Aorta (tissue), 5 donors: ENCODE measurements at regions of chr9 and their contacts with region 1.

Region 1: GRCh38 chr9:87812375-87813118 is 70.1 kb upstream of the SPATA31E1 start:
- DNase-seq: no peak
- ATAC-seq: no peak
- H3K4me3 ChIP-seq: no peak overlapping the region
- H3K27ac ChIP-seq: no peak overlapping the region
- H3K4me1 ChIP-seq: no peaks in the 10 kb centered on the region
- H3K27me3 ChIP-seq: no peaks in the 10 kb centered on the region

Region 2: GRCh38 chr9:87678650-87679515 is 133.7 kb before region 1 on chr9:
- intact Hi-C with region 1: loop called (anchors 2 kb)
- DNase-seq: no peak
- ATAC-seq: peak; percentile 74
- H3K4me3 ChIP-seq: no peak overlapping the region
- H3K27ac ChIP-seq: no peak overlapping the region
- H3K4me1 ChIP-seq: no peaks in the 10 kb centered on the region
- H3K27me3 ChIP-seq: no peaks in the 10 kb centered on the region

Region 3: GRCh38 chr9:87684627-87685219 is 127.8 kb before region 1 on chr9:
- intact Hi-C with region 1: loop called (anchors 2 kb)
- DNase-seq: peak in 1 of 2 donors; percentile 75
- ATAC-seq: peak; percentile 6
- H3K4me3 ChIP-seq: no peak overlapping the region
- H3K27ac ChIP-seq: no peak overlapping the region
- H3K4me1 ChIP-seq: no peaks in the 10 kb centered on the region
- H3K27me3 ChIP-seq: no peaks in the 10 kb centered on the region